Endothelial cell of umbilical vein (primary cell): ENCODE measurements at regions of chr2 and their contacts with region 1.

Region 1: GRCh38 chr2:197045115-197045514 is 118.6 kb upstream of the PGAP1 start:
- DNase-seq: no peak
- H3K4me3 ChIP-seq: no peak overlapping the region
- H3K27ac ChIP-seq: no peak overlapping the region
- H3K4me1 ChIP-seq: no peaks in the 10 kb centered on the region
- H3K27me3 ChIP-seq: no peaks in the 10 kb centered on the region
- CTCF ChIP-seq: no peak
- POLR2A ChIP-seq: no peak

Region 2: GRCh38 chr2:196482119-196483065 is 562.7 kb before region 1 on chr2:
- CTCF ChIA-PET with region 1: no interaction called
- POLR2A ChIA-PET with region 1: no interaction called
- dilution Hi-C with region 1: no loop called
- intact Hi-C with region 1: no loop called
- DNase-seq: no peak
- H3K4me3 ChIP-seq: no peak overlapping the region
- H3K27ac ChIP-seq: no peak overlapping the region
- H3K4me1 ChIP-seq: no peaks in the 10 kb centered on the region
- H3K27me3 ChIP-seq: peaks cover 19 to 39% of the 10 kb centered on the region in 2 experiments
- CTCF ChIP-seq: no peak
- POLR2A ChIP-seq: no peak

Region 3: GRCh38 chr2:197035002-197035401 is 10.1 kb before region 1 on chr2:
- CTCF ChIA-PET with region 1: interaction called, 10 read pairs
- POLR2A ChIA-PET with region 1: no interaction called
- dilution Hi-C with region 1: no loop called
- intact Hi-C with region 1: no loop called
- DNase-seq: no peak
- H3K4me3 ChIP-seq: no peak overlapping the region
- H3K27ac ChIP-seq: no peak overlapping the region
- H3K4me1 ChIP-seq: peaks cover 10% of the 10 kb centered on the region
- H3K27me3 ChIP-seq: no peaks in the 10 kb centered on the region
- CTCF ChIP-seq: no peak
- POLR2A ChIP-seq: no peak